HEK293 (cell line): ENCODE measurements at regions of chr5 and their contacts with region 1.

Region 1: DNA sequence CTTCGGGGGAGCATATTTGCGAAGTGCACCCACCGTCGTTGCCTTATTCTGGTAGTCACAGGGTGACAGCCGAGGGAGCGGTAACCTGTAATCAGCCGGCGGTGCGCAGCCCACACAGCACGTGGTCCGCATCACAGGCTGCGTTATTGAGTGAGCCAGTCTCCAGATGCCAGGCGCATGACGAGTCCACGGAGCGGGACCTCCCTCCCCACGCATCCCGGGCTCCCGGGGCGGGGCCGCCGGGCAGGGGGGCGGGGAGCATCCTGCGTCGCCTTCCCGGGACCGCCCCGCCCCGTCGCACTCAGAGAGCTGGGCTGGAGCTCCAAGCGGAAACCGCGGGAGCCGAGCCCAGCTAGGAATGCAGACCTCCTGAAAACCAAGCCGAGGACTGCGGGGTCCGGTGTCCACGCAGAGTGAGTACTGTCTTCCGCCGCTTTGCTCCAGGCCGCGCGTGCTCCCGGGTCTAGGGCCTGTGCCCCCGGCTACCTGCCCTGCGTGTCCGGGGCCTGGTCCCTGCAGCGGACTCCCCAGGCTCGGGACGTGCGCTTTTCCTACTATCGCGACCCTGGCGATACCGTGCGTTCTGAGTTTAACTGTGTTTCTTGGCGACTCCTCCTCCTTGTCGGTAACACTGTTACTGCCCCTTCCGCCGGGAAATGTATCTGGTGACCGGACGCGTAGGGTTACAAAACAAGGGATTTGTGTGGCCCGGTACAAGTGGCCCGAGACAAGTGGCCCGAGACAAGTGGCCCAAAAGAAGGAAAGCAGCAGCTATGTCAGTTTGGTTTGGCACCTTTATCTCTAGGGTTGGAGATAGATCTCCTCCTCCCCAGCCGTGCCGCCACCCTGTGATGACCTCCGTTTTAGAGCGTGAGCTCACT is 40.6 kb downstream of the CAST start:
- H3K4me3 ChIP-seq: peak overlapping the region; percentile 64
- H3K27ac ChIP-seq: peak overlapping the region; percentile 63
- H3K4me1 ChIP-seq: peaks cover 7% of the 10 kb centered on the region
- CTCF ChIP-seq: no peak

Region 2: DNA sequence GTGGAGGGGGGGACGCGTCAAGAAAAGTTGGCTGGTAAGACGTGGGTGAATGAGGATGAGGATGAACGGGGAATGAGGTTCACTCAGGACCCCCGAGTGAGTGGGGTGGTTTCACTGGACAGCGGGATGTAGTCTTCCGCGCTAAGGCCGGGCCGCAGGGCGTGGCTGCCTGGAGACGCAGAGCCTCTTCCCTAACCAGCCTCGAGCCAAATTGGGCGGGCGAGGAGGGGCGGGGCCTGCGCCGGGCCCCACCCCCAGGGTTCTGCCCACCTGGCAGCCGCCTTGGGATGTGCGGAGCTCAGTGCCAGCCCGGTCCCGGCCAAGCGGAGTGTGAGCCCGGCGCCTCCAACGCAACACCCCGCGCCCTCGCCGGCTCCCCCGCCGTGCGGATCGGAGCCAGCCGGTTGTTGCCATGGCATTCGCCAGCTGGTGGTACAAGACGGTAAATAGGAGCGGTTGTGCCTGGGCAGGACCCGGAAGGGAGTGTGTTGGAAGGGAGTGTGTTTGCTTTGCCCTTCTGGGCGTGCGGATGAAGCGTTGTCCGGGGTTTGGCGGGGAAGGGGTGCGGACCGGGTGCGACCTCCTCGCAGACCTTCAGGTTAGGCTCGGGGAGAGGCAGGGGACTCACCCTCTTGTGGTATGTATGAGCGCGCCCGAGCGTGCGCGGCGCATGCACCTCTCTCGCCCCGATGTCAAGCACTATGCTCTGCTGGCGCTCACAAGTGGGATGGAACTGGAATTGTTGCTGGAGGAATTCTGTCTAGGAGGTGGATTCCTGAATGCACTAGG is 39.8 kb before region 1 on chr5:
- CTCF ChIA-PET with region 1: interaction called, 4 read pairs
- POLR2A ChIA-PET with region 1: interaction called, 21 read pairs
- H3K4me3 ChIP-seq: peak overlapping the region; percentile 66
- H3K27ac ChIP-seq: peak overlapping the region; percentile 92
- H3K4me1 ChIP-seq: no peaks in the 10 kb centered on the region; the same call in none of the 2 replicates
- CTCF ChIP-seq: peak; percentile 56; the same call in 1 of the 2 replicates

Region 3: GRCh38 chr5:96714951-96715451 is 12.3 kb after region 1 on chr5:
- CTCF ChIA-PET with region 1: interaction called, 6 read pairs
- POLR2A ChIA-PET with region 1: interaction called, 12 read pairs
- H3K4me3 ChIP-seq: no peak overlapping the region
- H3K27ac ChIP-seq: no peak overlapping the region
- H3K4me1 ChIP-seq: peaks cover 13% of the 10 kb centered on the region
- CTCF ChIP-seq: no peak